Activated naive CD4-positive, alpha-beta T cell treated with anti-CD3 and anti-CD28 coated beads for 36 hours (primary cell): ENCODE measurements at regions of chr2 and their contacts with region 1.

Region 1: DNA sequence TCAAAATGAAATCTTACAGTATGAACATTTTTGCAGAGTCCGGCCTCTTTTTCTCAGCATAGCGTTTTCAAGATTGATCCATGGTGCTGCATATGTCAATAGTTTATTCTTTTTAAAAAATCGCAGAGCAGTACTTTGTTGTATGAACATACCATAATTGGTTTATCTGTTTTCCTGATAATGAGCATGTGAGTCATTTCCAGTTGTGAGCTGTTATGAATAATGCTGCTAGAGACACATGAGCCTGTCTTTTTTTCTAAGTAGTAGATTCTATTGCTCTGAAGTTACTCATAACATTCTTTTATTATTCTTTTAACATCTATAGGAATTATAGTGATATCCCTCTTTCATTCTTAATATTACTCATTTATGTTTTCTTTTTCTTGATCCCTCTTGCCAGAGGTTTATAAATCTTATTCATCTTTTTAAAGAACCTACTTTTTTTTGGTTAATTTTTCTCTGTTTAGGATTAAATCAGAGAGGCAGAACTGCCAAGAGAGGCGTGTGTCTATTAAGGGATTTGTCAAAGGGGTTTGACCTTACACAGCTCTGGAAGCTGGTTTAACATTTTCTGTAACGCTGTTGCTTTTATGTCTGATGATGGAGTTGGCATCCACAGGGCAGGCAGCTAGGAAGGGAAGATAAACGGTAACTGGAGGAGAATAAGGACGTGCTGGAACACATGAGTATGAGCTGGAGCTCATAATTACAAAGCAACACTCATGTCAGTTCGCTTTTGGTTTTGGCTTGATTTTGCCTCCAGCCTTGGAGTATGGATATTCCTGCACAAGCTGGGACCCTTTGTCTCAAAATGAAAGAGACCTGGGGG is 47.4 kb downstream of the MGAT5 start:
- DNase-seq: no peak
- H3K4me3 Mint-ChIP-seq: peak overlapping the region; percentile 5
- H3K27ac Mint-ChIP-seq: no peak overlapping the region
- H3K4me1 Mint-ChIP-seq: peaks cover 46% of the 10 kb centered on the region
- H3K27me3 Mint-ChIP-seq: no peaks in the 10 kb centered on the region

Region 2: DNA sequence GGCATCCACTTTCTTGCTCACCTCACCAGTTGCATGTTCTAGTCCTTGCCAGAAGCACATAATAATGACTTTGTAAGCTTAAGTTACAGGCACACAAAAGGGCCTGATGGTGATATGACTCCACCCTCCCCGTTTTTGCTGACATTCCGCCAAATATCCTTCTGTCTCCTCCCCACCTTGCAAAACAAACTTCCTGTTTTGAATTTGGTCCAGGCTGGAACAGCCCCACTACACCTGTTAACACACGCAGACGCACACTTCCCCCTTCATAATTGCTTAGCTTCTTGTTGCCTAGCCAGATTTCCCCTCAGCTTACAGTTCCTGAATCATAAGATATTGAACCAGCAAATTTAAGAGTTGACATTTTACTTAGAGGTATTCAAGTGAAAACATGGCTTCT is 47.5 kb before region 1 on chr2 and contains the start of gene MGAT5:
- CTCF ChIA-PET with region 1: no interaction called
- intact Hi-C with region 1: loop called (anchors 1 kb)
- DNase-seq: no peak
- H3K4me3 Mint-ChIP-seq: no peak within 1 kb of the TSS
- H3K27ac Mint-ChIP-seq: no peak within 1 kb of the TSS
- H3K4me1 Mint-ChIP-seq: peaks cover 82% of the 10 kb centered on the region
- H3K27me3 Mint-ChIP-seq: peaks cover 2% of the 10 kb centered on the region
- total RNA-seq, gene MGAT5: 11.6 to 13.0 TPM

Region 3: DNA sequence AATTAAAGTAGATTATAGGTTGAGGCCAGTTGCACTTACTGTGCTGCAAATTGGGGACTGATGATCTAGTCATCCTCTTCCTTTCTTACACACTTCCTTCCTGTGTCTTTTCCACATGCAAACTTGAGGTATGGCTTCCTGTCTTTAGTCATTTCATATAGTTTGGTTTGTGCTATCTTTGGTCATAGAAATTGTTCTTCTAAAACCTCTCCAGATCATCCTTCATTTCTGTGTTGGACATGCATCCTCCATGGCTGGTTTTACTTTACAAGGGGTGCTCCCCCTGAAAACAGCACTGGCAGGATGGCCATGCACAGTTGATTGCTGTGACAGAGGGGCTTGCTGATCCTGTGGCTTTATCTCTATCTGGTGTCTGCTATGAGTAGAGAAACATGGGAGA is 11.0 kb before region 1 on chr2:
- CTCF ChIA-PET with region 1: interaction called, 3 read pairs
- intact Hi-C with region 1: loop called (anchors 1 kb)
- DNase-seq: peak; percentile 30
- H3K4me3 Mint-ChIP-seq: no peak overlapping the region
- H3K27ac Mint-ChIP-seq: no peak overlapping the region
- H3K4me1 Mint-ChIP-seq: peaks cover 24% of the 10 kb centered on the region
- H3K27me3 Mint-ChIP-seq: no peaks in the 10 kb centered on the region

Region 4: DNA sequence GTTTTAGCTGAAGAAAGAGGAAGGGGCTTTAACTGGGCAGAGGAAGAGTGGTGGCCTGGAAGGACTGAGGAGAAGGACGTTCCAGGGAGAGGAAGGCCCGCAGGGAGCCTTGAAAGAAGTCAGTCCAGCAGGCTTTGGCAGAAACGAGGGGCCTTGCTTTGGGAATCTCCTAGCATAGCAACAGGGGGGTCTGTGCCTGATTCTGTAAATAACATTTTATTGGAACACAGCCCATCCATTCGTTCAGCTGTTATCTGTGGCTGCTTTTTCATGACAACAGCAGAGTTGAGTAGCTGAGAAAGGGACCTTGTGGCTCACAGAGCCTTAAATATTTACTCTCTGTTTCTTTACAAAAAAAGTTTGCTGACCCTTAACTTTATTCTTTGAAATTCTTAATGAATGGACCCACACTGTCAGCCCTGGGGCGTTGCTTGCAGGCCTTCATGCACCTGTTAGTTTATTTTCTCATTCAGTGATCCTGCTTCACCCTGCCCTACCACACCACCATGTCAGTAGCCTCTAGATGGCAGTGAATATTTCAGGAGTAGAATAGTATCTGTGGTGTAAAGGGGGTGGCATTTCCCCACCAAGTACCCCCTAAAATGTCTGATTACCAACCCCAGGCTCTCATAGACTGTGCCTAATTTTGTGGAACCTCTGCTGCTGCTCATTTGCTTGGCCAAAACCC is 13.5 kb after region 1 on chr2:
- CTCF ChIA-PET with region 1: interaction called, 4 read pairs
- intact Hi-C with region 1: loop called (anchors 1 kb)
- DNase-seq: no peak
- H3K4me3 Mint-ChIP-seq: no peak overlapping the region
- H3K27ac Mint-ChIP-seq: no peak overlapping the region
- H3K4me1 Mint-ChIP-seq: peaks cover 33% of the 10 kb centered on the region
- H3K27me3 Mint-ChIP-seq: no peaks in the 10 kb centered on the region

Region 5: DNA sequence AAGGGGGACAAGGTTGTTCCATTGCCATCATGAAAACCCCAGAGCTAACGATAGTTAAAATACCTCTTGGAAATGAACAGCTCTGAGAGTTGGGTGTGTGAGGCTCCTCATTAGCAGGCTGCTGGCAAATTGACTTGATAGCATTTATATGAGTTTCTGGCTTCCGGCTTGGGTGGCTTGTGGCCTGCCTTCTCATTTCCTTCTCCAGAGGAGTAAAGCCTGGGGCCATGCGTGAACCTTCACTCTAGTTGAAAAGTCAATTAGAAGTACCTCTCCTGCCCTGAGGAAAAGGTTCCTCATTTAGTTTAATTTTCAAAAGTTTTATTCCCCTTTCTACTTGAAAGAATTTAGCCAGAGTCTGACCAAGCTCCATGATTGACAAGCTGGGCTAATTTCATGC is 19.6 kb after region 1 on chr2:
- CTCF ChIA-PET with region 1: interaction called, 3 read pairs
- intact Hi-C with region 1: loop called (anchors 2 kb)
- DNase-seq: peak; percentile 75
- H3K4me3 Mint-ChIP-seq: no peak overlapping the region
- H3K27ac Mint-ChIP-seq: no peak overlapping the region
- H3K4me1 Mint-ChIP-seq: peaks cover 42% of the 10 kb centered on the region
- H3K27me3 Mint-ChIP-seq: no peaks in the 10 kb centered on the region